Breast epithelium (tissue), 4 donors: ENCODE measurements at regions of chr1 and their contacts with region 1.

Region 1: DNA sequence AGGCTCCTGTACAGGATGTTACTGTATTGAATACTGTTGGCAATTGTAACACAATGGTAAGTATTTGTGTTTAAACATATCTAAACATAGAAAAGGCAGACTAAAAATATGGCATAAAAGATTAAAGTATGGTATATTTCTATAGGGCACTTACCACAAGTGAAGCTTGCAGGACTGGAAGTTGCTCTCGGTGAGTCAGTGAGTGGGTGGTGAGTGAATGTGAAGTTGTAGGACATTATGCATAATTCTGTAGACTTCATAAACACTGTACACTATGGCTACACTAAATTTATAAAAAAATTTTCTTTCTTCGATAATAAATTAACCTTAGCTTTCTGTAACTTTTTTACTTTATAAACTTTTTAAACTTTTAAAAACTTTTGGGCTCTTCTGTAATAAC is 13.7 kb upstream of the TRIM62 start:
- DNase-seq: no peak
- H3K4me3 ChIP-seq: no peak overlapping the region
- H3K27ac ChIP-seq: no peak overlapping the region
- H3K4me1 ChIP-seq: no peaks in the 10 kb centered on the region
- H3K27me3 ChIP-seq: no peaks in the 10 kb centered on the region
- CTCF ChIP-seq: no peak
- POLR2A ChIP-seq: no peak

Region 2: GRCh38 chr1:34199927-34200326 is 1004.4 kb after region 1 on chr1:
- intact Hi-C with region 1: loop called (anchors 10 kb)
- DNase-seq: no peak
- H3K4me3 ChIP-seq: no peak overlapping the region
- H3K27ac ChIP-seq: no peak overlapping the region
- H3K4me1 ChIP-seq: no peaks in the 10 kb centered on the region
- H3K27me3 ChIP-seq: no peaks in the 10 kb centered on the region
- CTCF ChIP-seq: no peak
- POLR2A ChIP-seq: no peak